Adrenal gland (tissue), 19 donors: ENCODE measurements at regions of chr3 and their contacts with region 1.

Region 1: GRCh38 chr3:5136211-5136918 is 14.3 kb downstream of the ARL8B start:
- DNase-seq: peak in 2 of 7 donors; percentile 25 to 30
- H3K4me3 ChIP-seq: no peak overlapping the region
- H3K27ac ChIP-seq: peak overlapping the region in 2 of 5 donors; percentile 36 to 65
- H3K4me1 ChIP-seq: peaks cover 29 to 77% of the 10 kb centered on the region in 2 donors
- H3K27me3 ChIP-seq: no peaks in the 10 kb centered on the region
- CTCF ChIP-seq: peak in 5 of 6 experiments; percentile 32 to 44 (median 37)
- POLR2A ChIP-seq: no peak

Region 2: GRCh38 chr3:5187156-5187919 is 51.0 kb after region 1 on chr3 and contains the start of gene EDEM1:
- intact Hi-C with region 1: loop called in 1 of 2 experiments (anchors 10 kb)
- DNase-seq: peak; percentile 95 to 98 (median 97)
- H3K4me3 ChIP-seq: peak within 1 kb of the TSS; percentile 29 to 90 (median 82)
- H3K27ac ChIP-seq: peak within 1 kb of the TSS; percentile 71 to 98 (median 96)
- H3K4me1 ChIP-seq: peaks cover 4 to 48% of the 10 kb centered on the region in 2 donors
- H3K27me3 ChIP-seq: no peaks in the 10 kb centered on the region
- CTCF ChIP-seq: no peak
- POLR2A ChIP-seq: peak; percentile 71 to 83
- total RNA-seq, gene EDEM1: 9.9 to 63.6 (median 34.8) TPM

Region 3: DNA sequence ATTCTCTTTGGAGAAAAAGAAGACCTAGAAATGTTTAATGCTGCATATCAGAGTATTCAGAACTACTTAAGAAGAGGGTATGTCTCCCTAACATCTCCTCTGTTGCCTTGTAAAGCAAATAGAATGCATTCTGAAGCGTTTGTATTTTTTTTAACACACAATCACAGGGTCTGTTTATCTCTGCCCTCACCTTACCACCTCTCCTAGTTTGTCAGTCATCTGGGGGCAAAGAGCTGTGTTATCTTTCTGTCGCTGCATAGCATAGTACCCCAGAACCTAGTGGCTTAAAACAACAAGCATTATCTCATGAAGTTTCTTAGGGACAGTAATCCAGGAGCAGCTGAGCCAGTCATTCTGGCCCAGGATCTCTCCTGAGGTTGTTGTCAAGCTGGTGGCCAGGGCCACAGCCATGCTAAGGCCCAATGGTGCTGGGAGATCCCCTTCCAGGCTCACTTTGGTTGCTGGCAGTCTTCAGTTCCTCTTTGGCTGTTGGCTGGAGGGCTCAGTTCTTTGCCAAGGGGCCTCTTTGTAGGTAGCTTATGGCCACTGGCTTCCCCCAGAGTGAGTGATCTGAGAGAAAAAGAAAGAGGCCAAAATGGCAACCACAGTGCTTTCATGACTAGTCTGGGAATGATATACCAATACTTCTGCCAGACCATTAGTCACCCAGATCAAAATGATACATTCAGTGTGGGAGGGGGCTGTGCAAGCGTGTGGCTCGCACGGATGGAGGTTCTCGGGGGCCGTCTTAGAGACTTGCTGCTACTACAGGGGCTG is 69.0 kb after region 1 on chr3:
- intact Hi-C with region 1: loop called in 1 of 2 experiments (anchors 10 kb)
- DNase-seq: no peak
- H3K4me3 ChIP-seq: no peak overlapping the region
- H3K27ac ChIP-seq: no peak overlapping the region
- H3K4me1 ChIP-seq: no peaks in the 10 kb centered on the region
- H3K27me3 ChIP-seq: no peaks in the 10 kb centered on the region
- CTCF ChIP-seq: no peak
- POLR2A ChIP-seq: no peak